PC-9 (cell line): ENCODE measurements at regions of chr11 and their contacts with region 1.

Region 1: GRCh38 chr11:77776455-77776854 is 44.1 kb downstream of the RSF1 start:
- DNase-seq: no peak
- H3K4me3 ChIP-seq: no peak overlapping the region
- H3K27ac ChIP-seq: no peak overlapping the region
- H3K4me1 ChIP-seq: no peaks in the 10 kb centered on the region
- H3K27me3 ChIP-seq: no peaks in the 10 kb centered on the region
- CTCF ChIP-seq: peak; percentile 81

Region 2: GRCh38 chr11:78000193-78000592 is 223.7 kb after region 1 on chr11:
- CTCF ChIA-PET with region 1: no interaction called
- POLR2A ChIA-PET with region 1: no interaction called
- intact Hi-C with region 1: loop called (anchors 1 kb)
- DNase-seq: peak; percentile 45 to 70
- H3K4me3 ChIP-seq: no peak overlapping the region
- H3K27ac ChIP-seq: no peak overlapping the region
- H3K4me1 ChIP-seq: peaks cover 7% of the 10 kb centered on the region
- H3K27me3 ChIP-seq: no peaks in the 10 kb centered on the region
- CTCF ChIP-seq: peak; percentile 89